Pancreas (tissue), 10 donors: ENCODE measurements at regions of chr6 and their contacts with region 1.

Region 1: GRCh38 chr6:106339334-106340029 is 13.9 kb upstream of the ATG5 start:
- DNase-seq: peak in 4 of 6 donors; percentile 30 to 67 (median 40)
- ATAC-seq: peak; percentile 90 to 95 (median 94)
- H3K4me3 ChIP-seq: peak overlapping the region in 1 of 4 donors; percentile 8
- H3K27ac ChIP-seq: no peak overlapping the region
- H3K4me1 ChIP-seq: no peaks in the 10 kb centered on the region
- H3K27me3 ChIP-seq: no peaks in the 10 kb centered on the region
- CTCF ChIP-seq: peak; percentile 54 to 68 (median 64)

Region 2: DNA sequence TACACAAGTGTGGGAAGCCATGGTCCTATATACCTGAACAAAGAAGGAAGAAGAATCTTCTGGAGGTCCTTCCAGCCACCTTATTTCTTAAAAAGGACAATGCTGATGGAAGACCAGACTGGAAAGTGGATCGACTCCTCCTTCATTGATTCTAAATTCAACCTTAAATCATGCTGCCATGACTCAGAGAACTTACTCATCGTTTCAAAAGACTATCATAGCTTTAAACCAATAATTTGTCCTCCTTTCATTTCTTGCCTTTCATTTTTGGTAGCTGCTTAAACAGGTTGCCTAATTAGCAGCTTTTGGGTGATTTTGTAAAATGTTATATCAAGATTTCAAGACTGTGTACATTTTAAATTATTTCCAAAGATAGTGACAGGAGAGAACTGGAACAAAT is 229.0 kb after region 1 on chr6:
- intact Hi-C with region 1: loop called in 1 of 3 experiments (anchors 5 kb)
- DNase-seq: no peak
- ATAC-seq: no peak
- H3K4me3 ChIP-seq: no peak overlapping the region
- H3K27ac ChIP-seq: no peak overlapping the region
- H3K4me1 ChIP-seq: no peaks in the 10 kb centered on the region
- H3K27me3 ChIP-seq: no peaks in the 10 kb centered on the region
- CTCF ChIP-seq: no peak

Region 3: DNA sequence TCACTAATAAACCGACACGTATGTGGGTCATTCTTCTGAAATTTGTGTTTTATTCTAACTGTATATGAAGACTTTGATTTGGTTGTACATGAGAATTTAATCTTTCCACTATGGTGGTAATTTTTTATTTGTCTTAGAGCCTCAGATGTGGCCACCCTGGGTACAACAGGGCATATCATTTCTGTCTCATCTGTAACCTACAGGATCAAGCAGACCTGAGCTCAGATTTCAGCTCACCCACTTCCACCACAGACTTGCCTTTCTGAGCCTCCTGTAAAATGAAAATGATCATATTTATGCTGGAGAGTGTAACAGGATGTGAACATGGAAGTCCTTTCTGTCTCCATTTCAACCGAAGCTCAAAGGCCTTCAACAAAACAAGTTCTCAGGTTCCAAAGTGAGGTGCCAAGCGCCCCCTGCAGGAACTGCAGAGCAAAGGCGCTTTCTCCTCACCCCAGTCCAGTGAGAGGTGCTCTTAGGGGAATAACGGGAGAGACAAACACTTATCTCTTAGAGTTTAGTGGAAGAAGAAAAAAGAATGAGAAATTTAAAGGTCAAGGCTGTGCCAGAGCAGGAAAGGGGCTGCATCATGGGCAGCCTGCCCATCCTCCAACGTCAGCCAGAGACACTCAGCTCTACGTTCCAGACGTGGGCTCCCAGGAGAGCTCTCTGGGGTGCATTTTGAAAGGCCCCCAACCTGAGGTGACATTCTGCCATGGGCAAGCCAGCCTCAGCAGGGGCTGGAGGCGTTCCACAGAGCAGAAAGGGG is 658.1 kb after region 1 on chr6:
- intact Hi-C with region 1: loop called in 1 of 3 experiments (anchors 5 kb)
- DNase-seq: peak; percentile 43 to 84 (median 70)
- ATAC-seq: peak; percentile 75 to 98 (median 90)
- H3K4me3 ChIP-seq: no peak overlapping the region
- H3K27ac ChIP-seq: no peak overlapping the region
- H3K4me1 ChIP-seq: no peaks in the 10 kb centered on the region
- H3K27me3 ChIP-seq: no peaks in the 10 kb centered on the region
- CTCF ChIP-seq: peak; percentile 69 to 81 (median 80)